HEK293T (cell line): ENCODE measurements at regions of chr17 and their contacts with region 1.

Region 1: DNA sequence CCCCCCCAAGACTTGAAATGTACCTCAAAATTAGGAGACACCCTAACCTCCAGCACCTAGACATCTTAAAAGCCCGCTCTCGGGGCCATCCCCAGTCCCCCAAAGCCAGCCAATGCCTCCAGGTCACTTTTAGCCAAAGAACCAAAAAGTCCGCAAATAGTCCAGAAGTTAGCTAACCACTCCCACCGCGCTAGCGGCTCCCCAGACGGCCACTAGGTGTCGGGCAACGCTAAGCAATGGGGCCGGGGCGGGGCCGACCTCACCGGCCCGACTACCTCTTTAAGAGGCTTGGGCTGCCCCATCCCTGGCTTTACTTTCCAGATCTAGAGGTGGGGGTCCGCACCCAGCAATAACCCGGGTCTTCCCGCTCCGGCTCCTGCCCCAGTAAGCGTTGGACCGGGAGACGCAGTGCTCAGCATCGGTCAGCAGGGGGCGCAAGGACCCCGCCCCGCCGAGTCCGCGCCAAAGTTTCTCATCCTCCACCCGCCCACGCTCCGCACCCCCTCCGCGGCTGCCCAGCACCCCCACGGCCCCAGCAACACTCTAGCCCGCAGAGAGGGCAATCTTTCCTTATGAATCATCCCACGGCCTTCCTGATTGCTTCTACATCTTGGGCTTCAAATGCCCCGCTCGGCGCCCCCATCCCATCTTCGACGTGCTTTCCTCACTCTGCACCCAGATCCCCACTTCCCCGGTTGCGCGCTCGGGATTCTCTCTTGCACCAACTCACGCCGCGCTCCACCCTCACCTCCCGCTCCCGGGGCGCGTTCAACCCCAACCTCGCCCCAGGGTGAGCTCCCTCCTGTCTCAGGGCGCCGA is 765 bp downstream of the COL1A1 start:
- DNase-seq: peak; percentile 89

Region 2: DNA sequence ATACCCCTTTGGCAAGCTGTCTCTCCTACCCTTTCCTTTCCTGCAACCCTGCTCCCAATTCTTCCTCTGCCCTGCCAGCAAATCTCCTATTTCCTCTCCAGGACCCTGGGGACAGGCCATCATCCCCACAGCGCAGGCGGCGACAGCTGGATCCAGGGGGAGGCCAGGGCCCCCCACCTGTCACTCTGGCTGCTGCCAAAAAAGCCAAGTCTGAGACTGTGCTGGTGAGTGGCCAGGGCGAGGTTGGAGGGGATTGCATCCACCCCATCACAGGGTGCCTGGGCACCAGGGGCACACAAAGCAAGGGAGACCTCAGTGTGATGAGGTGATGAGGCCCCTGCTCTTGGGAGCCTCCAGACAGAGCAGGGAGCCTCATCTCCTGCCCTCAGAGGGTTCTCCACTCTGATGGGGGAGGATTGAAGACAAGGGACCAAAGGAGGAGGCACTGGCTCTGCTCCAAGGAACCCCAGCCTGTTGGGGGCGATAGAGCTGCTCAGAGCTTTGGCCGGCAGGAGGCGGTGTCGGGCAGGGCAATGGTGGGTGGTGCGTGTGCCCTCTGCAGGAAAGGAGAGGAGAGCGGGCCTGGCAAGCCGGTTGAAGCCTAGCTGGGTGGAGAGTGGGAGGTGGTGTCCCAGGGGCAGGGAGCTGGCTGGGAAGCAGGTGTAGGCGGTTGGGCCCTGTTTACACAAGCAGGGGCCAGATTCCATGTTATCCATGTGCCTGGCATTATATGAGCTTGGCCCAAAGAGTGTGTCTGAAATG is 121.2 kb before region 1 on chr17:
- CTCF ChIA-PET with region 1: no interaction called
- POLR2A ChIA-PET with region 1: no interaction called
- DNase-seq: peak; percentile 49

Region 3: GRCh38 chr17:50144355-50144754 is 56.3 kb before region 1 on chr17:
- CTCF ChIA-PET with region 1: no interaction called
- POLR2A ChIA-PET with region 1: no interaction called
- DNase-seq: no peak

Region 4: DNA sequence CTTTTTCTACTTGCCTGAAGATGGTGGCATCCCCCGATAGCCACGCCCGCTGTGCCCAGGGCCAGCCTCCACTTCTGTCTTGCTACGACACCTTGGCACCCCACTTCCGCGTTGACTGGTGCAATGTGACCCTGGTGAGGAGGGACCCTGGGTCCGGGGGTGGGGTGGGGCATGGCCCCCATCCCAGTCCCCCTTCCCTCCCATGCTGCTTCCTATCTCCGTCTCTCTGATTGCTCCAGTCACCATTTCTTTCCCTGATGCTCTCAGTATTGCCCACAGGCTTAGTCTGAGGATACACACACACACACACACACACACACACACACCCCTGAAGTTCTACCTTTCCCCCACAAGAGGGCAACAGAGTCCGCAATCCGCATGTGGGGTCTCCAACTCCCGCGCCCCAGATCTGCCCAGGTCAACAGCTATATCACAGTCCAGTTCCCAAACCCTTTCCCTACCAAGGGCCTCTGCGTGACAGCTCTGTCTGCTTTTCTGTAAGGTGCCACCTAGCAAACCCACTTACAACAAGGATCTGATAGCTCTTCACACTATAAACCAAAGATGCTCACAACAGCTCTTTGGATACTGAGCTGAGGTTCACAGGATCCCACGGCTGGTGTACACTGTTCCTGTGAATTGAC is 31.4 kb before region 1 on chr17:
- CTCF ChIA-PET with region 1: interaction called, 32 read pairs
- POLR2A ChIA-PET with region 1: interaction called, 5 read pairs
- DNase-seq: peak; percentile 75

Region 5: DNA sequence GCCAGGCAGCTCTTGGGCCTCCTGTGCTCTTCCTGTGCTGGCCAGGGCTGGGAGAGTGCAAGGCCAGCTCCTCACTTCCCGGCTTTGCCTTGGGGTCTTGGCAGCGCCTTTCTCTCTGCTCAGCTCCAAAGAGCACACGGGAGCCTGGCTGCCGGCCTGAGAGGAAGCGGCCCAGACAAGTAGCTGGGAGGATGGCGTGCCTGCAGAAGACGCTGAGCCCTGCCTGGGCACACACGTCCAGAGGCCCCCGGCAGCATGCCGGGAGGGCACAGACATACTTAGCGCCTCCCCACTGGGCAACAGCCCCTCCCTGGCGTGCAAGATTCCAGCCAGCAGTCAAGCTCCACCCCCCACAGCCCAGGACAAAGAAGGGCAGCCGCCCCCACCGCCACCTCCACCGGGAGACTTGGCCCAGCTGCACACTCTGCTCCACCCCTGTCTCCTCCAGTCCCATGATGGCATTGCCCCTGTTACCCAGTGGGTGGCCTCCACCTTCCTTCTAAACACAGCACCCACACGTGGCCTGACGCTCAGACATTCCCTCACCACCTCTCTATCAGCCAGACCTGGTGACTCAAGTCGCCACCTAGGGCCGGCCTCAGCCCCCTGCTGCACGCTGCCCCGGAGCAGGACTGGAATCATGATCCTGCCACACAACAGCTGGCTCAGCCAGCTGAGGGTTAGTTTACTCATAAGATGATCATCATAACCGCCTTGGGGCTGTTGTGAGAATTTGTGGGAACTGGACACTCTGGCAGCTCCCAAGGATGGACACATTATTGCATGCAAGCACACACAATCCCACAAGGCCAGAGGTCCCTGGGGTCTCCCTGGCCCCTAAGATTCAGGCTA is 22.5 kb before region 1 on chr17:
- CTCF ChIA-PET with region 1: interaction called, 10 read pairs
- POLR2A ChIA-PET with region 1: interaction called, 5 read pairs
- DNase-seq: peak; percentile 80

Region 6: GRCh38 chr17:50213026-50214022 is 12.7 kb after region 1 on chr17:
- CTCF ChIA-PET with region 1: interaction called, 12 read pairs
- POLR2A ChIA-PET with region 1: no interaction called
- DNase-seq: peak; percentile 39

Region 7: DNA sequence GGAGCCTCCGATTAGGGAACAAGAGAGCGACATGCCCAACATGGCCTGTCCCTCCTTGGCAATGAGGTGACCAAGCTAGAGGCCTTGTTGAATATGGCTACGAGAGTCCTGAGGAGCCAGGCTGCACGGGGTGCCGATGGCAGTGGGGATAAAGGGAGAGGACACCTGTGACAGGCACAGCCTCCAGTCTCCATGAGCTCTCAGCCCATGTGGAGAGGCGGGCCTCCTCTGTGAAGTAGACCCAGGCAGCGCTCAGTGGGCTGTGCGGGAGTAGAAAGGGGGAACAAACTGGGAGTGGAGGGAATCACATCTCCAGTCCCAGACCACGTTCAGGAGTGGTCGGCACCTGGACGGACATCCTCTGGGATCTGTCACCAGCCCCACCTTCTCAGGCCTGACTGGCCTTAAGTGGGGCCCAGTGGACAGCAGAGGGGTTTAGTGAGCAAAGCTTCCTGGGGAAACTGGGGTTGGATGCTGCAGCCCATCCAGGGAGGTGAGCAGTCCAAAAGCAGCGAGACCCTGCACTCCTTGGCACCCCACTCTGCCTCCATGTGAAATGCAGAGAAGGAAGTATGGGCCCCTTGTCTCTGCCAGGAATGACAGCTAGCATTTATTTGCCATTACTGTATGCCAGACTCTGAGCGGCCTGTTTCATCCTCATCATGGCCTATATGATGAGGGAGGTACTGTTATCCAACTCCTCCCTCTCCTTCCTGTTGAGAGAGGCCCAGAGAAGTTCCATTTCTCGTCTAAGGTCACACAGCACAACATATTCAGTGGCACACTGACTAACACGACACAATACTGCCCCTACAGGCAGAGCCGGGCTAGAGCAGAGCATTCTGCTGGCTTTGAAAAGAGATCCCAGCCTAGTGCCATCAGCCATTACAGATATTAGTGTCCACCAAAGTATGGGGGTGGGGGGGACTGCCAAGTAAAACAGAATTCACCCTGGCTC is 69.1 kb after region 1 on chr17:
- CTCF ChIA-PET with region 1: interaction called, 16 read pairs
- POLR2A ChIA-PET with region 1: interaction called, 3 read pairs
- DNase-seq: peak; percentile 81

Region 8: DNA sequence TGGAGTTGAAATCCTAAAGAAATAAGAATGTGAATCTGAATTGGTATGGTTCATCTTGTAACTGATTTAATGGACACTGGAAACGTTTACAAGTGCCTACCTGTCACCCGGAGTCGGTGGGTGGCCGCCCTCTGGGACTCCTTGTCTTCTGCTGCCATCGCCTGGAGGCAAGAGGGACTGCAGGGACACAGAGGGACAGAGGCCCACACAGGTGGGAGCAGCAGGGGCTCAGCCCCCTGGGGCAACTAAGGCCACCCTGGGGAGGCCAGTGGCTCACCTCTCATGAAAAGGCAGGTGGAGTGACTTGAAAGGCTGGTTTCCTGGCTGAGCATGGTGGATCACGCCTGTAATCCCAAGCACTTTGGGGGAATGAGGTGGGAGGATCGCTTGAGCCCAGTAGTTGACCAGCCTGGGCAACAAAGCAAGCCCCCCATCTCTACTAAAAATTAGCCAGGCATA is 96.8 kb after region 1 on chr17:
- CTCF ChIA-PET with region 1: interaction called, 35 read pairs
- POLR2A ChIA-PET with region 1: no interaction called
- DNase-seq: peak; percentile 90